Panc1 (cell line): ENCODE measurements at regions of chr6 and their contacts with region 1.

Region 1: DNA sequence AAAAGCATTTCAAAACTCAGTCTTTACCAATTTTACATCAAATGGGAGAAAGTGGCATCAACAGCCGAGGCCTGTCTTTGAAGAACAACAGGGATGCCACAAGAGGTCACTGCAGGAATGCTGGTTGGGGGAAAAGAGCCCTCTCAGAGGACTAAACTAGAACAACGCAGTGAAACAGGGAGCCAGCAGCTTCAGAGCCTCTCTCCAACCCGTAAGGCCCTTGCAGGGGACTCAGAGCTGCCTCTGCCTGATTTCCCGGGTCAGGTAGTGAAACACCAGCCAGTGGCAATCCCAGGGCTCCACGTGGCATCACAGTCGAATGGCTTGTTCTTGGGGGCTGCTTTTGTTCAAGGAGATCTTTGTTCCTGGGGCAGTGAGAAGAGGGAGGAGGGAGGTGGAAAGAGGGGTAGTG is 55.0 kb upstream of the KCNK16 start:
- DNase-seq: no peak
- ATAC-seq: peak; percentile 91
- H3K4me3 ChIP-seq: no peak overlapping the region
- H3K27ac ChIP-seq: no peak overlapping the region
- H3K4me1 ChIP-seq: no peaks in the 10 kb centered on the region
- H3K27me3 ChIP-seq: no peaks in the 10 kb centered on the region
- CTCF ChIP-seq: peak; percentile 75

Region 2: GRCh38 chr6:38588631-38589366 is 788.7 kb before region 1 on chr6:
- CTCF ChIA-PET with region 1: no interaction called
- POLR2A ChIA-PET with region 1: no interaction called
- in situ Hi-C with region 1: no loop called
- intact Hi-C with region 1: no loop called
- DNase-seq: no peak
- ATAC-seq: no peak
- H3K4me3 ChIP-seq: no peak overlapping the region
- H3K27ac ChIP-seq: no peak overlapping the region
- H3K4me1 ChIP-seq: no peaks in the 10 kb centered on the region
- H3K27me3 ChIP-seq: no peaks in the 10 kb centered on the region
- CTCF ChIP-seq: no peak

Region 3: DNA sequence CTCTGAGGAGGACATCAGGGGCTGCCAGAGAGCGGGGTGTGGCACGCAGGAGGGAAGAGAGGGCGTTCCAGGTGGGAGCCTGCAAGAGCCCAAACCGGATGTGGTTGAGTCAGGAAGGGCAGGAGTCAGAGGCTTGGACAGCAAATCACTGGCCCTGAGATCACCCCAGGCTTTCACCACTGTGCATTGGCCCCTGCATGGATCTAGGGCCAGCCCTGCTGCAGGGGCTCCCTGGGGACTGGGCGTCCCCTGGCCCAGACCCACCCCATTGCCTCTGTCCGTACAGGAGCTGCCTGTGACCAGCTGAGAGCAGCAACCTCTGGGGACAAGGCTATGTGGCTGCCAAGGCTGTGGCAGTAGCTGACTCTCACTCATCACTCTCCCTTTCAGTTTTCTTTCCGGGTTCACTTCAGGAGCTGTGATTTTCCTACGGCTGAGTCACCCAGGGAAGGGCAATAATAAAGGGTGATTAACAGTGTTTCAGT is 97.3 kb before region 1 on chr6:
- CTCF ChIA-PET with region 1: no interaction called
- POLR2A ChIA-PET with region 1: no interaction called
- in situ Hi-C with region 1: no loop called
- intact Hi-C with region 1: no loop called
- DNase-seq: no peak
- ATAC-seq: peak; percentile 85
- H3K4me3 ChIP-seq: no peak overlapping the region
- H3K27ac ChIP-seq: no peak overlapping the region
- H3K4me1 ChIP-seq: no peaks in the 10 kb centered on the region; the same call in 1 of the 2 replicates
- H3K27me3 ChIP-seq: no peaks in the 10 kb centered on the region; the same call in 1 of the 2 replicates
- CTCF ChIP-seq: no peak

Region 4: GRCh38 chr6:39347906-39348585 is 29.5 kb before region 1 on chr6:
- CTCF ChIA-PET with region 1: interaction called, 11 read pairs
- POLR2A ChIA-PET with region 1: no interaction called
- in situ Hi-C with region 1: no loop called
- intact Hi-C with region 1: no loop called
- DNase-seq: peak; percentile 51
- ATAC-seq: peak; percentile 85
- H3K4me3 ChIP-seq: no peak overlapping the region
- H3K27ac ChIP-seq: no peak overlapping the region
- H3K4me1 ChIP-seq: no peaks in the 10 kb centered on the region
- H3K27me3 ChIP-seq: no peaks in the 10 kb centered on the region
- CTCF ChIP-seq: peak; percentile 92

Region 5: GRCh38 chr6:40308533-40309306 is 931.2 kb after region 1 on chr6:
- CTCF ChIA-PET with region 1: no interaction called
- POLR2A ChIA-PET with region 1: no interaction called
- in situ Hi-C with region 1: no loop called
- intact Hi-C with region 1: loop called (anchors 10 kb)
- DNase-seq: peak; percentile 41
- ATAC-seq: peak; percentile 71; the same call in 1 of the 2 replicates
- H3K4me3 ChIP-seq: no peak overlapping the region
- H3K27ac ChIP-seq: no peak overlapping the region
- H3K4me1 ChIP-seq: no peaks in the 10 kb centered on the region
- H3K27me3 ChIP-seq: peaks cover 14% of the 10 kb centered on the region
- CTCF ChIP-seq: peak; percentile 85

Region 6: GRCh38 chr6:40477246-40478126 is 1099.9 kb after region 1 on chr6:
- CTCF ChIA-PET with region 1: no interaction called
- POLR2A ChIA-PET with region 1: no interaction called
- in situ Hi-C with region 1: no loop called
- intact Hi-C with region 1: no loop called
- DNase-seq: no peak
- ATAC-seq: no peak
- H3K4me3 ChIP-seq: no peak overlapping the region
- H3K27ac ChIP-seq: no peak overlapping the region
- H3K4me1 ChIP-seq: no peaks in the 10 kb centered on the region
- H3K27me3 ChIP-seq: peaks cover 3% of the 10 kb centered on the region; the same call in 1 of the 2 replicates
- CTCF ChIP-seq: no peak